ENCODE measurements at regions of chr1 and their contacts with region 1.

Region 1: DNA sequence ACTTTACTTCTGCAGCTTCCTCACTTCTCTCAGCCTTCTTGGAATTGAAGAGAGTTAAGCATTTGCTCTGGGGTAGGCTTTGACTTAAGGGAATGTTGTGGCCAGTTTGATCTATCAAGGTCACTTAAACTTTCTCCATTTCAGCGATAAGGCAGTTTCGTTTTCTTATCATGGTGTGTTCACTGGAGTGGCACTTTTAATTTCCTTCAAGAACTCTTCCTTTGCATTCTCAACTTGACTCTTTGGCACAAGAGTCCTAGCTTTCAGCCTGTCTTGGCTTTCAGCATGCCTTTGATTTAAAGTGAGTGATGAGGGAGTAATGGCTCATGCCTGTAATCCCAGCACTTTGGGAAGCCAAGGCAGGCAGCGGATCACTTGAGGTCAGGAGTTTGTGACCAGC is 38.7 kb downstream of the HS2ST1 start:
- DNase-seq: no peak
- ATAC-seq: peak; percentile 34; the same call in 1 of the 2 replicates
- H3K4me3 ChIP-seq: no peak overlapping the region
- H3K27ac ChIP-seq: no peak overlapping the region; the same call in 1 of the 2 replicates
- H3K4me1 ChIP-seq: 0 out of 2 replicates have a peak, but pooled peaks cover 3% of the 10 kb centered on the region
- H3K27me3 ChIP-seq: no peaks in the 10 kb centered on the region
- CTCF ChIP-seq: no peak

Region 2: DNA sequence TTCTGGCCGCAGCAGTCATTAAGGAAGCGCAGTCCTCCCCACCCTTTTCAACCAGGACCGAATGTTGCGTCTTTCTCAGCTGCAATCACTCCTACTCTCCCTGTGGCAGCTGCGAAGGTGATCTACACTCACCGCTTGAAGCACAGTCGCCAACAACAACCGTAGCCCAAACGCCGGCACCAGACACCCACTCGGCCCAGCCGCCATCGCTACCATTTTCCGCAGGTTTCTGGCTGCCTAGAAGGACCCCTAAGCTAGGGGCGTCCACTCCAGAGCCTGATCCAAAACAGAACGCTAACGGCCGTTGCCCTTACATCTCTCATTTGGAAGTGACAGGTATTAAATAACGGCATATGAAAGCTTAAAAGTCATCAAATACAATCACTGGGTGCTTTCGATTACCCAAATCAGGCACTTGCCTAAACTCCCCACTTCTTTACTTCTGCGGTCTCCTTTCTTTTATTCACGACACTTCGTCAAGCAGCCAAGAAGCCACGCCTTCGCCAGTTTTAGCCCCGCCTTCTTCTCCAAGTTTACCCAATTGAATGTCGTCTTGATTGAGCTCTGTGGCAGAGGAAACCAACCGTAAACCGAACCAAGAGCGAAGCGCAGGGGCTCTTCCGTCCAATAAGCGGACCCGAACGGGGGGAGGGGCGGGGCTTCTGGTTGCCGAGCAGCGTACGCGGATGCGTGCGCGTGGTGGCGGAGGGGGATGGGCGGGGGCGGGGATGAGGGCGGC is 39.1 kb before region 1 on chr1 and contains the start of gene SELENOF:
- CTCF ChIA-PET with region 1: no interaction called
- POLR2A ChIA-PET with region 1: interaction called, 12 read pairs
- in situ Hi-C with region 1: no loop called
- intact Hi-C with region 1: no loop called
- DNase-seq: peak; percentile 100
- ATAC-seq: peak; percentile 95
- H3K4me3 ChIP-seq: peak within 1 kb of the TSS; percentile 99 to 100
- H3K27ac ChIP-seq: peak within 1 kb of the TSS; percentile 100
- H3K4me1 ChIP-seq: peaks cover 21% of the 10 kb centered on the region; the same call in 1 of the 2 replicates
- H3K27me3 ChIP-seq: no peaks in the 10 kb centered on the region
- CTCF ChIP-seq: no peak
- total RNA-seq, gene SELENOF: 190 TPM